ENCODE measurements at regions of chr6 and their contacts with region 1.

Region 1: GRCh38 chr6:29992807-29993206 is 50.5 kb downstream of the HLA-A start:
- DNase-seq: no peak
- H3K4me3 Mint-ChIP-seq: no peak overlapping the region
- H3K27ac Mint-ChIP-seq: no peak overlapping the region
- H3K4me1 Mint-ChIP-seq: no peaks in the 10 kb centered on the region
- H3K27me3 Mint-ChIP-seq: no peaks in the 10 kb centered on the region

Region 2: DNA sequence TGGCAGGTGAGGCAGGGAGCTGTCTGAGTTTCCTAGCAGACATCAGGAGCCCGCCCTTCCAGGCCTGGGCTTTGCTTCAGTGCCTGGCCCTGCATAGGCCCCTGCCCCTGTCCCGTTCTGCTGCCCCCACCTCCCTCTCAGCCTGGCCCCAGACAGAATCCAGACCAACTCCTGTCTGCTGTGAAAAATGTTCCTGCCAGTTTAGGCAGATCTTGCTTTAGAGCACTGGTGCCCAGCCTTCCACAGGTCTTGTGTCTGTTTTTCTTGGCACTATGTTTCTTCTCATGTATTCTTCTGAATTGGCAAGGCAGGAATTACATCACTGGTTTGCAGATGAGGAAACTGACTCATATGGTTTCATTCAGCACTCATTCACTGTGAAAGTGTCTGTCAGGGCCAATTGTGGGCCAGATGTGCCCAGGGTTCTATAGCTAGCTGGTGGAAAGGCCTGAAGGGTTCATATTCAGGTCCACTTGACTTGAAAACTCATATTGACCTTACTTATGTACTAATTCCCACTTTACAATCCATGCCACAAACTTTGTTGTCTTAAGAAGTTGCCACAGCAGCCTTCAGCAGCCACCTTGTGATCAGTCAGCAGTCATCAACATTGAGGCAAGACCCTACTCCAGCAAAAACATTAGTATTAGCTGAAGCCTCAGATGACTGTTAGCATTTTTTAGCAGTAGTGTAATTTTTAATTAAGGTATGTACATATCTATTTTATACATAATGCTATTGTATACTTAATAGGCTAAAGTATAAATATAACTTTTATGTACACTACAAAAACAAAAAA is 229.1 kb before region 1 on chr6:
- CTCF ChIA-PET with region 1: no interaction called
- intact Hi-C with region 1: loop called (anchors 1 kb)
- DNase-seq: peak; percentile 61
- H3K4me3 Mint-ChIP-seq: no peak overlapping the region
- H3K27ac Mint-ChIP-seq: peak overlapping the region; percentile 6
- H3K4me1 Mint-ChIP-seq: peaks cover 13% of the 10 kb centered on the region
- H3K27me3 Mint-ChIP-seq: no peaks in the 10 kb centered on the region